HepG2 (cell line): ENCODE measurements at regions of chr15 and their contacts with region 1.

Region 1: DNA sequence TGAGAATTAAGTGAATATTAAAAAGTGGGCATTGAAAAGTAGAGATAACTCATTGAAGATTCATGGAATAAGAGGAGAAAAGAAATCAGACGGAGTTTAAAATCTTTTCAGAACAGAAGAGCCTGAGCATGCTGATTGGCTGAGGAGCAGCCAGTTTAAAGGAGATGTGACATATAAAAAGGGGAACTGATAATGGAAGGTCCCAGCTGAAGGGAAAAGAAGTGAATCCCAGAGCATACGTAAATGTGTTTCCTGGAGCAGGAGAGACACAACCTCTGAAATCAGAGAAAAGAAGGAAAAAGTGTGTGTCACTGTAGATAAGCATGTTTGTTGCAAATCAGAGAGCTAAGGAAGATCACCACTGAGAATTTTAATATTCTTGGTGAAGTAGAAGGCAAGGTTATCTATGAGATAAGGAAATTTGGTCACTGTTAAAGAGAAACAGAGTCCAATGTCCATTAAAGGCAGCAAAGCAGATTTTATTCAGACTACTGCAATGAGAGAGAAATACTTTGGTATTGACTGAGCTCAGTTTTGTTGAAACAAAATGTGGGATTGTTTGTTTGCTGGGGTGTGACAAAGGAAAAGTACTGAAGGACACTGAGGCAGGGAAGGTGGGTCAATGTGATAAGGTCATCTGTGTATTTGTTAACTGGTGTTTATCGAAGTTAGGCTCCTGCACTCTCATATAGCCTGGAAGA is 84.6 kb upstream of the WDR72 start:
- DNase-seq: peak; percentile 84
- ATAC-seq: peak; percentile 86
- H3K4me3 ChIP-seq: peak overlapping the region in 1 of 3 experiments; percentile 9; a peak in 1 of 6 replicates
- H3K27ac ChIP-seq: peak overlapping the region; percentile 80
- H3K4me1 ChIP-seq: peaks cover 71% of the 10 kb centered on the region
- H3K27me3 ChIP-seq: no peaks in the 10 kb centered on the region
- CTCF ChIP-seq: no peak
- EP300 ChIP-seq: peak in 1 of 2 experiments; percentile 95; a peak in 2 of 4 replicates
- POLR2A ChIP-seq: no peak
- RAD21 ChIP-seq: no peak

Region 2: GRCh38 chr15:53833134-53833624 is 10.8 kb before region 1 on chr15:
- CTCF ChIA-PET with region 1: no interaction called
- POLR2A ChIA-PET with region 1: interaction called, 28 read pairs
- in situ Hi-C with region 1: no loop called
- intact Hi-C with region 1: loop called (anchors 1 kb)
- DNase-seq: peak; percentile 94
- ATAC-seq: peak; percentile 67
- H3K4me3 ChIP-seq: peak overlapping the region; percentile 2 to 53 (median 14); a peak in 1 of 6 replicates
- H3K27ac ChIP-seq: peak overlapping the region; percentile 99
- H3K4me1 ChIP-seq: peaks cover 85% of the 10 kb centered on the region
- H3K27me3 ChIP-seq: no peaks in the 10 kb centered on the region
- CTCF ChIP-seq: no peak
- EP300 ChIP-seq: peak in 1 of 2 experiments; percentile 92; a peak in 2 of 4 replicates
- POLR2A ChIP-seq: peak; percentile 41 to 69
- RAD21 ChIP-seq: no peak